ENCODE measurements at regions of chr4 and their contacts with region 1.

Region 1: DNA sequence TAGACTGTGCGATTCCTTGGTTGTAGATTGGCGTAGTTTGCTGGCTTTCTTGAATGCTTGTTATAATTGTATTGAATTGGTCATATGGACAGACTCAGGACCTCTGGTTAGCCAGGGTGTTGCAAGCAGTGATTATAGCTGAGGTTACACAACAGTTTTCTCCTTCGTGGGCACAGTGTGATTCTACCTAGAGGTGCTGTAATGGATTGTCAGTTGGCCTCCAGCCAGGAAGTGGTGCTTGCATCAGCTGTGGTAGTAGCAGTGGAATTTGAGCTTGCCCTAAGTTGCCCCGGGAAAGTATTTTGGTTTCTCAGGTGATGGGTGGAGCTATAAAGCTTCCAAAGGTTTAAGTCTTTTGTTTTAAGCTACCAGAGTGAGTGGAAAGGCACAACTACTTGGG is 23.1 kb upstream of the GABRG1 start:
- DNase-seq: no peak

Region 2: GRCh38 chr4:44342800-44343199 is 1804.2 kb before region 1 on chr4:
- intact Hi-C with region 1: loop called in 1 of 2 experiments (anchors 10 kb)
- DNase-seq: no peak

Region 3: DNA sequence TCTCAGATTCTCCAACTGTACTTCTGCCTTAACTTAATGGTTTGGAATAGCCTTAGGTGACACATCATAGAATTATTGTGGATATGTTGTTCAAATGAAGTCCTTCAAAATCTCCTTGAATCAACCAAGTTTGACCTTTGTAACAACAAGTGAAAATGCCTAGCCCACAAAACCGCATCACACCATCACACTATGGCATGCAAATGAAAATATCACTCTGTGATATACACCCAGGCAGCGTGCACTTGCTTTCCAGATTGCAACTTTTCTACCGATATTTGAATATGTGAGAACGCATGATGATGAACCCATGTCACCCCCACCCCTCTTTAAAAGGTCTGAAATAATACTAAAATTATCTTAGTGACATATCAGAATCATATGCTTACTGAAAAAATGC is 679.8 kb before region 1 on chr4:
- intact Hi-C with region 1: no loop called
- DNase-seq: no peak

Region 4: GRCh38 chr4:46179356-46179755 is 32.4 kb after region 1 on chr4:
- intact Hi-C with region 1: no loop called
- DNase-seq: no peak

Region 5: DNA sequence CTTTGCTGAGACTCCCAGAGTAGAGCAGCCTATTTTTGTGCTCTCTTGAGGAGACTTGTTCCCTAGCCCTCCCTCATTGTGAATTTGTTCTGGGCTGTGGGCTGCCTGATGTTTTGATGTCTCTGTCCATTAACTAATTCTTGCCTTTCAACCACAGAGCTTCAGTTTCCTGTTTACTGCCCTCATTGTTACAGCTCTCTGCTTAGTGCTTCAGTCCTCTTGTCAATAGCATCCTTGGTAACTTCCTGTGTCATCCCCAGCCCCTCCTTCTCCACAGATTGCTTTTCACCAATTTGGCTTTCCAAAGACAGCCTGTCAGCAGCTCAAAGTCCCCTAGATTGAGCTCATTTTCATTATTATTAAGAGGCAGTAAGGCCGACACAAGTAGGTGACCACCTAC is 692.1 kb after region 1 on chr4:
- intact Hi-C with region 1: no loop called
- DNase-seq: no peak

Measured in posterior vena cava (tissue), 2 donors.